ENCODE measurements at regions of chr2 and their contacts with region 1.

Region 1: DNA sequence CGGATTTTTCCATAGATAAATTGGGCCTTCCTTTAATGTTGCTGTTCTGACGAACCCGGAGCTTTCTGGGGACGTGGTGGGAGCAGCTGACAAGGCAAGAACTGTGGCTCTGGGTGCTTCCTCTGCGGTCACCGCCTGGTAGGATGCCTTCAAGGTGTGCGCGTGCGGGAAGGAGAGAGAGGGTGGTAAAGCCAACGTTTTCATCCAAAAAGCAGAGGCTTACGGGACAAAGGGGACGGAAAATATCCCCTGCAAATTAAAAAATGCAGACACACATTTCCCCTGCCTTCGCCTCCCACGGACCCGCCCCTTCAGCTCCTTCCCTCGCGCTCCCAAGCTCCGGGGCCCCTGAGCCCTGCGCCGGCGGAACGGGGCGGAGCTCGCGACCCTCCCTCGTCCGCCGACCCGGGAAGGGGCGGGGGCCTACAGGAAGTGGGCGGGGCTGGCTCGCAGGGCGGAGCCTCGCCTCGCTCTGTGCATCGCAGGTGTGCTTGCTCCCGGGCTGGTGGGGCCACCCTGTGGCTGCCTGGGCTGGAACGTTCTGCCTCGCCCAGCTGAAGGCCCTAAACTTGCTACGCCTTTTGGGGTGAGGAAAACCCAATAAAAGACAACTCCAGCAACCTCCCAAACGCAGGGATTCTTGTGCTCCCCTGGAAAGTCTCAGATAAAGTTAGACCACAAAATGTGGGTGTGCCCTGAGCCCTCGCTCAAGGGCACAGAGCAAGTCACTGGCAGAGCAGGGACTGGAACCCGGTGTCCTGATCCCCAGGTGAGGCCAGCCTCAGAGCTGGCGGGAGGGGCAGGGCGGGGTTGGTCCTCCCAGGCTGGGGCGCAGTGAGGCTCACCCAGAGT is 25.4 kb upstream of the SLC66A3 start:
- DNase-seq: peak in 1 of 2 donors; percentile 67
- ATAC-seq: peak in 3 of 4 donors; percentile 14 to 39 (median 25)
- H3K4me3 ChIP-seq: peak overlapping the region; percentile 55
- H3K27ac ChIP-seq: peak overlapping the region; percentile 16
- H3K4me1 ChIP-seq: peaks cover 18% of the 10 kb centered on the region
- H3K27me3 ChIP-seq: peaks cover 0 to 4% (median 0%) of the 10 kb centered on the region in 3 donors
- CTCF ChIP-seq: peak; percentile 6

Region 2: GRCh38 chr2:11155381-11156035 is 25.7 kb after region 1 on chr2 and contains the start of gene SLC66A3:
- intact Hi-C with region 1: loop called in 1 of 2 experiments (anchors 2 kb)
- DNase-seq: no peak
- ATAC-seq: peak in 3 of 4 donors; percentile 84 to 86 (median 84)
- H3K4me3 ChIP-seq: peak within 1 kb of the TSS; percentile 78
- H3K27ac ChIP-seq: peak within 1 kb of the TSS; percentile 87
- H3K4me1 ChIP-seq: peaks cover 10% of the 10 kb centered on the region
- H3K27me3 ChIP-seq: no peaks in the 10 kb centered on the region
- CTCF ChIP-seq: peak; percentile 22
- total RNA-seq, gene SLC66A3: 3.9 to 6.7 (median 4.7) TPM

Region 3: DNA sequence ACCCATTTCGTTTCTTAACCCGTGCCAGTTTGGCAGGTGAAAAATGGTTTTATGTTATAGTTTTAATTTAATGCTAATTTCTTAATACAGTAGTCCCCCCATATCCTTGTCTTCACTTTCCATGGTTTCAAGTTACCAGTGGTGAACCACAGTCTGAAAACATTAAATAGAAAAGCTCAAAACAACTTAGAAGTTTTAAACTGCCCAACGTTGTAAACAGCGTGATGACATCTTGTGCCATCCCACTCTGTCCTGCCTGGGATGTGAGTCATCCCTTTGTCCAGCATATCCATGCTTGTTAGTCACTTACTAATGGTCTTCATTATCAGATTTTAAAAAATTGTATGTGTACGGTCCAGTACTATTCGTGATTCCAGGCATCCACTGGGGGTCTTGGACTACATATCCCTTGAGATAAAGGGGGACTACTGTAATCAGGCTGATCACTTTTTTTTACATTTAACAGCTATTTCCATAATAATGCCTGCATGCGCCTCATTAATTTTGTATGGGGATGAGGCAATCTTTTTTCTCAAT is 57.3 kb after region 1 on chr2:
- intact Hi-C with region 1: loop called (anchors 5 to 10 kb)
- DNase-seq: no peak
- ATAC-seq: peak; percentile 28 to 66 (median 50)
- H3K4me3 ChIP-seq: no peak overlapping the region
- H3K27ac ChIP-seq: no peak overlapping the region
- H3K4me1 ChIP-seq: no peaks in the 10 kb centered on the region
- H3K27me3 ChIP-seq: no peaks in the 10 kb centered on the region
- CTCF ChIP-seq: no peak

Region 4: DNA sequence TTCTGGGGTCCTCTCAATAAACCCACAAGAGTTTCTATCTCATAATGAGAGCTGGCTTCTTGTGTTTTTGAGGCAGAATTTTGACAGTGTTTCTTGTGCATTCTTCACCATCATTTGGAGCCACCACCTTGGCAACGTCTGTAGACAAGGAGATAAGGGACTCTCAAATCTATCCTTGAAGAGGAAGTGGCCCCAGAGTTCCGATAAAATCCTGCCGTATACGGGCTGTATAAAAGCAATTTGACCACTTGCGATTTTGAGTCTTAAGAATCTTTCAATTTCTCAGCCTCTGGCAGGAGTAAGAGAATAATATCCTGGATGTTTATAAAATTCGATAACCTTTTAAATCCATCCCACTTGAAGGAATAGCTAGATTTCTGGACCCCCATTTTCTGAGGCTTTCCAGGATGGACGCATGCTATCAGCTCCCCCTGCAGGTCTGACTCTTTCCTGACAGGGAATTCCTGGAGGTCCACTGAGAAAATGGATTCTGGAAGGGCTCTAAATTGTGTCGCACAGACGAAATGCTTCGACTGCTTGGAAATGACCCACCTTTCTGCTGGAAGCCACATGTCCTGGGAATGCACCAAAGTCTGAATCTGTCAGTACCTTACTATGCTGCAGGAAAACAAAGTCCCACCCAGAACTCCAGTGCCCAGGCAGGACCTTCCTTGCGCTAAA is 282.1 kb after region 1 on chr2:
- intact Hi-C with region 1: loop called in 1 of 2 experiments (anchors 1 kb)
- DNase-seq: no peak
- ATAC-seq: peak in 2 of 4 donors; percentile 65 to 76
- H3K4me3 ChIP-seq: peak overlapping the region; percentile 62
- H3K27ac ChIP-seq: no peak overlapping the region
- H3K4me1 ChIP-seq: peaks cover 39% of the 10 kb centered on the region
- H3K27me3 ChIP-seq: no peaks in the 10 kb centered on the region
- CTCF ChIP-seq: peak; percentile 83

Region 5: DNA sequence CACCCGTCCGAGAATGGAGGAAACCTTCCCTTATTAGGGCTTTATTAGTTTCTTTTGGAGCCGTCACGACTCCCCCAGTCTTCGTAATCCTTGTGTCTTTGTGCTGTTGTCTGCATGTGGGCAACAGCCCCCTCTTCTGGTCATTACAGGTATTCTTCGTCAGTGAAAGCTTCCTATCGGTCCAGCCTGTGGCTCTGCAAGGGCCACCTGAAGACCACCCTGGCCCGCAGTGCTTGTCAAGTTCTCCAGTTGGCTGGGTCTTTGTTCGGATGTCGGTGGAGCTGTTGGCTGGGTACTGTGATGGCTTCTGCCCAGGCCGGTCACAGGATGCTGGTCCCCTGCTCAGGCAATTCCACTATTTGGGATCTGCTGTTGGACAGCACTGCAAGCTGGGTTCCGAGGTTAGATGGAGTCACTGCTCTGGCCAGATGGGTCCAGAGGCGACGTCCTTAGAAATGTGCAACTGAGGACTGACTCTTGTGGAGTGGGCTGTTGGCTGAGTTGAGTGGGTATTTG is 317.0 kb after region 1 on chr2:
- intact Hi-C with region 1: loop called in 1 of 2 experiments (anchors 2 kb)
- DNase-seq: peak in 1 of 2 donors; percentile 24
- ATAC-seq: peak; percentile 87 to 91 (median 88)
- H3K4me3 ChIP-seq: no peak overlapping the region
- H3K27ac ChIP-seq: peak overlapping the region; percentile 32
- H3K4me1 ChIP-seq: no peaks in the 10 kb centered on the region
- H3K27me3 ChIP-seq: no peaks in the 10 kb centered on the region
- CTCF ChIP-seq: peak; percentile 88

Region 6: DNA sequence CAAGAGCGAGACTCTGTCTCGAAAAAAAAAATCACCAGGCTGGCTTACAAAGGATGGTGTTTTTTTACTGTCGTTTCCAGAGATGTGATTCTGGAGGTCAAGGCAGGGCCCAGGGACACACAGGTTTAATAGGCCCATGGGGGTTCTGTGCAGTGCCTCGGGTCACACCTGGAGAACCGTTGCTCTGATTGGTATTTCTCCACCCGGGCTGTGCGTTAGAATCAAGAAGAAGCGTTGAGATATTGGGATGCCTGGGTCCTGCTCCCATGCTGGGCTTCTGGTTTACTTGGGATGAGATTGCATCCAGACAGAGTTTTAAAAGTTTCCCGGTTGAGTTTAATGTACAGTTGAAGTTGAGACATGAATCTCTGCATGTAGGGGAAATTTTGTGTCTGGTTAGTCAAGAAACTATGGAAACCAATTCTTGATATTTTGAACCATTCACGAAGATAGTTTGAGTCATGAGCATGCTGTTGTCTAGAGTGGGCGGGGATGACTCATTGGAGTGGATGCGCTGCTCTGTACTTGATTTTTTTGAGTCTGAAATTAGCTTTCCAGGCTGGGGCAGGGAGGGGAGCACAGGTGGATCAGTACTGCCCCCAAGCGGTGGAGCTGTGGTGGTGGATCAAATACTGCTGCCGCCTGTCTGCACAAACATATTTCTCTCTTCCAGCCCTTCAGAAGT is 454.2 kb after region 1 on chr2:
- intact Hi-C with region 1: loop called (anchors 2 to 10 kb)
- DNase-seq: peak; percentile 72 to 84
- ATAC-seq: peak; percentile 72 to 79 (median 76)
- H3K4me3 ChIP-seq: no peak overlapping the region
- H3K27ac ChIP-seq: peak overlapping the region; percentile 58
- H3K4me1 ChIP-seq: peaks cover 7% of the 10 kb centered on the region
- H3K27me3 ChIP-seq: no peaks in the 10 kb centered on the region
- CTCF ChIP-seq: peak; percentile 87